SK-N-SH (cell line): ENCODE measurements at regions of chr2 and their contacts with region 1.

Region 1: DNA sequence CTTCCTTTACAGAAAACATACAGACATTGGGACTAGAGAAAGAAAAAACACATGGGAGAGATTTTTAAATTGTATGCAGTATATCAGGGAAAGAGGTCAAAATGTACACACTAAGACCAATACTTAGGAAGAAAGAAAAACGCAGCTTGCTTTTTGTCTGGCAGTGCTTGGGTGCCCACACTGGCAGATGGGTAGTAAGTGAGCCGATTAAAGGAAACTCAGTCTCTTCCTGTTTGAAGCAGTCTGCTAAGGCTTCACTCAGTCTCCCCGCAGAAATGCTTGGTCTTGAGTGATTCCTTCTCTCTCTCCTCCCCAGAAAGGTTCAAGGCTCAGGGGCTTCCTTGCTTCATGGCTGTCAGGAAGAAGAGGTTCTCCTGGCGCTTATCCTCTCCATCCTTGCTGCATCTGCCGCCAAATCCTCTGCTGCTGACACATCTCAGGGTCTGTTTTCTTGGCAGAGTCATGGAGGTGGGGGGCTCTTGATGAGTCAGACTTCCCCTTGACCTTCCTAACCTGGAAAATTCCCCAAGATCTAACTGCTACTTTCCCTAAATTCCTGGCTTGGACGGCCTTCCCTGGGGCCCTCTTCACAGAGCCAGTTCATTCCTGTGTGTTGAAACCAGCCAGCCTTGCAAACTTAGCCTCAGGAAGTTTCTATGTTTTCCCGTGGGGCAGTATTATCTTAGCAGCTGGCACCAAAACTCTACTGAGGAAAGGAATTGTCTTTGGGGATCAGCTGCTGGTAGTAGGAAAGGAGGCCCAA is 10.5 kb upstream of the TMSB10 start:
- DNase-seq: no peak
- H3K4me3 ChIP-seq: no peak overlapping the region
- H3K27ac ChIP-seq: peak overlapping the region in 1 of 2 experiments; percentile 71; a peak in 2 of 4 replicates
- H3K4me1 ChIP-seq: peaks cover 0 to 46% of the 10 kb centered on the region in 2 experiments; a peak in 3 of 4 replicates
- H3K27me3 ChIP-seq: no peaks in the 10 kb centered on the region
- CTCF ChIP-seq: no peak
- EP300 ChIP-seq: peak in 1 of 2 experiments; percentile 51; a peak in 1 of 4 replicates
- RAD21 ChIP-seq: no peak

Region 2: GRCh38 chr2:84881581-84882414 is 13.1 kb before region 1 on chr2:
- CTCF ChIA-PET with region 1: interaction called, 10 read pairs
- POLR2A ChIA-PET with region 1: no interaction called
- DNase-seq: peak; percentile 75
- H3K4me3 ChIP-seq: peak overlapping the region; percentile 44 to 66
- H3K27ac ChIP-seq: no peak overlapping the region
- H3K4me1 ChIP-seq: peaks cover 2 to 12% of the 10 kb centered on the region in 2 experiments; a peak in 3 of 4 replicates
- H3K27me3 ChIP-seq: peaks cover 16% of the 10 kb centered on the region
- CTCF ChIP-seq: peak; percentile 85
- EP300 ChIP-seq: no peak
- RAD21 ChIP-seq: peak; percentile 70

Region 3: GRCh38 chr2:85861180-85861579 is 966.2 kb after region 1 on chr2:
- CTCF ChIA-PET with region 1: no interaction called
- POLR2A ChIA-PET with region 1: no interaction called
- DNase-seq: no peak
- H3K4me3 ChIP-seq: no peak overlapping the region
- H3K27ac ChIP-seq: no peak overlapping the region
- H3K4me1 ChIP-seq: peaks cover 0 to 3% of the 10 kb centered on the region in 2 experiments; a peak in 1 of 4 replicates
- H3K27me3 ChIP-seq: no peaks in the 10 kb centered on the region
- CTCF ChIP-seq: no peak
- EP300 ChIP-seq: no peak
- RAD21 ChIP-seq: no peak